GM12878 (cell line): ENCODE measurements at regions of chr1 and their contacts with region 1.

Region 1: GRCh38 chr1:207404849-207405525 is 49.1 kb upstream of the CR2 start:
- DNase-seq: no peak
- ATAC-seq: peak; percentile 95
- H3K4me3 ChIP-seq: no peak overlapping the region
- H3K27ac ChIP-seq: no peak overlapping the region
- H3K4me1 ChIP-seq: peaks cover 10% of the 10 kb centered on the region
- H3K27me3 ChIP-seq: no peaks in the 10 kb centered on the region
- CTCF ChIP-seq: peak; percentile 62 to 81 (median 65)
- EP300 ChIP-seq: no peak
- POLR2A ChIP-seq: no peak
- RAD21 ChIP-seq: peak; percentile 85

Region 2: GRCh38 chr1:207052911-207053769 is 351.8 kb before region 1 on chr1 and contains the start of gene PFKFB2:
- CTCF ChIA-PET with region 1: interaction called, 13 read pairs
- POLR2A ChIA-PET with region 1: no interaction called
- RAD21 ChIA-PET with region 1: interaction called, 6 read pairs
- SMC1A ChIA-PET with region 1: interaction called, 25 read pairs
- in situ Hi-C with region 1: no loop called
- intact Hi-C with region 1: no loop called
- DNase-seq: peak; percentile 66
- ATAC-seq: peak; percentile 87
- H3K4me3 ChIP-seq: peak within 1 kb of the TSS; percentile 82
- H3K27ac ChIP-seq: peak within 1 kb of the TSS; percentile 31; the same call in 1 of the 2 replicates
- H3K4me1 ChIP-seq: peaks cover 21% of the 10 kb centered on the region
- H3K27me3 ChIP-seq: no peaks in the 10 kb centered on the region
- CTCF ChIP-seq: peak in 2 of 3 experiments; percentile 18 to 31; a peak in 2 of 6 replicates
- EP300 ChIP-seq: no peak
- POLR2A ChIP-seq: peak; percentile 82
- RAD21 ChIP-seq: no peak
- polyA plus RNA-seq, gene PFKFB2: 0.40 to 0.47 TPM

Region 3: DNA sequence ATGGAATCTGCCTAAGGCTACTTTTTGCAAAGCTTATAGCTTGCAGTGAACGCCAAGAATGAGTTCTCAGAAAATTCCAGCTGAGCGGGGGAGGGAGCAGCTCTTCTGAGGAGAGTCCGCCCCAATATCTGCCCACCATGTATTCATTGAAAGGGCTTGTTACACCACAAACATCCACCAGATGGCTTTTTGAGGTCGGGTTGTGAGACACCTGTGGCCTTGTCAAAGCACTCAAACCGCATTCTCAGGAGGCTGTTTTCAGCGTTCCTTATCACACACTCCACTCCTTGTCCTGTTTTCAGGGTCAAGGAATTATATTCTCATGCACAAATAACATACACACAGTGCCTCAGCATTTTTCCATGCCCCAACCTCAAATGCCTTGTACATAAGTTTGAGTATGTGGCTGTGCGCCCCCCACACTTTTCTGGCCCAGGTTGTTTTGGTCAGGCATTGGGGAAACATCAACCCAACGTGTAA is 320.2 kb before region 1 on chr1:
- CTCF ChIA-PET with region 1: interaction called, 154 read pairs
- POLR2A ChIA-PET with region 1: no interaction called
- RAD21 ChIA-PET with region 1: interaction called, 54 read pairs
- SMC1A ChIA-PET with region 1: interaction called, 69 read pairs
- in situ Hi-C with region 1: loop called (anchors 5 kb)
- intact Hi-C with region 1: loop called (anchors 1 kb)
- DNase-seq: no peak
- ATAC-seq: peak; percentile 96
- H3K4me3 ChIP-seq: no peak overlapping the region
- H3K27ac ChIP-seq: no peak overlapping the region
- H3K4me1 ChIP-seq: peaks cover 4% of the 10 kb centered on the region; the same call in 1 of the 2 replicates
- H3K27me3 ChIP-seq: no peaks in the 10 kb centered on the region
- CTCF ChIP-seq: peak; percentile 63 to 68 (median 66)
- EP300 ChIP-seq: no peak
- POLR2A ChIP-seq: no peak
- RAD21 ChIP-seq: peak; percentile 80

Region 4: GRCh38 chr1:207181838-207182237 is 223.1 kb before region 1 on chr1:
- CTCF ChIA-PET with region 1: interaction called, 13 read pairs
- POLR2A ChIA-PET with region 1: no interaction called
- RAD21 ChIA-PET with region 1: interaction called, 7 read pairs
- SMC1A ChIA-PET with region 1: interaction called, 15 read pairs
- in situ Hi-C with region 1: no loop called
- intact Hi-C with region 1: loop called (anchors 10 kb)
- DNase-seq: no peak
- ATAC-seq: no peak
- H3K4me3 ChIP-seq: no peak overlapping the region
- H3K27ac ChIP-seq: no peak overlapping the region
- H3K4me1 ChIP-seq: no peaks in the 10 kb centered on the region
- H3K27me3 ChIP-seq: no peaks in the 10 kb centered on the region; a peak in 1 of 4 replicates
- CTCF ChIP-seq: peak in 2 of 3 experiments; percentile 11 to 33; a peak in 2 of 6 replicates
- EP300 ChIP-seq: no peak
- POLR2A ChIP-seq: no peak
- RAD21 ChIP-seq: peak; percentile 50

Region 5: GRCh38 chr1:207321079-207321789 is 83.8 kb before region 1 on chr1 and contains the start of gene CD55:
- CTCF ChIA-PET with region 1: interaction called, 20 read pairs
- POLR2A ChIA-PET with region 1: no interaction called
- RAD21 ChIA-PET with region 1: interaction called, 46 read pairs
- SMC1A ChIA-PET with region 1: interaction called, 31 read pairs
- in situ Hi-C with region 1: no loop called
- intact Hi-C with region 1: loop called (anchors 1 kb)
- DNase-seq: peak; percentile 97
- ATAC-seq: peak; percentile 92
- H3K4me3 ChIP-seq: peak within 1 kb of the TSS; percentile 85
- H3K27ac ChIP-seq: peak within 1 kb of the TSS; percentile 86
- H3K4me1 ChIP-seq: no peaks in the 10 kb centered on the region
- H3K27me3 ChIP-seq: no peaks in the 10 kb centered on the region
- CTCF ChIP-seq: peak; percentile 16 to 39 (median 37); a peak in 4 of 6 replicates
- EP300 ChIP-seq: peak in 1 of 2 experiments; percentile 90; a peak in 3 of 4 replicates
- POLR2A ChIP-seq: peak; percentile 97
- RAD21 ChIP-seq: peak; percentile 31
- polyA plus RNA-seq, gene CD55: 5.2 to 6.0 TPM

Region 6: GRCh38 chr1:207423560-207424292 is 18.7 kb after region 1 on chr1:
- CTCF ChIA-PET with region 1: interaction called, 14 read pairs
- POLR2A ChIA-PET with region 1: no interaction called
- RAD21 ChIA-PET with region 1: interaction called, 11 read pairs
- SMC1A ChIA-PET with region 1: interaction called, 14 read pairs
- in situ Hi-C with region 1: no loop called
- intact Hi-C with region 1: no loop called
- DNase-seq: no peak
- ATAC-seq: peak; percentile 73
- H3K4me3 ChIP-seq: peak overlapping the region; percentile 38; the same call in 1 of the 2 replicates
- H3K27ac ChIP-seq: no peak overlapping the region
- H3K4me1 ChIP-seq: peaks cover 30% of the 10 kb centered on the region
- H3K27me3 ChIP-seq: no peaks in the 10 kb centered on the region
- CTCF ChIP-seq: peak; percentile 24 to 44 (median 27); a peak in 5 of 6 replicates
- EP300 ChIP-seq: no peak
- POLR2A ChIP-seq: no peak
- RAD21 ChIP-seq: peak; percentile 38; the same call in 1 of the 2 replicates

Region 7: DNA sequence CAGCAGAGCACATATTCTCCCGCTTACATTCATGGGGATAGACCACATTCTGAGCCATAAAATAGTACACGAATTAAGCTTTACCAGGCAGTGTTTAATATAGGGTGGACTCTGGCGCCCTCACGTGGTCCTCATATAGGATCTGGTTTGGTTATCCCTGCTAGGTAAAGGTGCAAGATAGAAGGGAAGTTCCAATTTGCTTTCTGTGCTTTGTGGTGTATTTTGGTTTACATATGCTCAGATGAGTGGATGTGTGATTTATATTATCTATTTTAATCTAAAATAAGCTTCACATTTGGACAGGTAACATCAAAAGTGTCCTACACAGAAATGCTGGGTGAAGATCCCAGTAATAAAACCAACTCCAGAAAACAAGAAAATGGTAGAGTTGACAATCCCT is 94.6 kb after region 1 on chr1:
- CTCF ChIA-PET with region 1: interaction called, 43 read pairs
- POLR2A ChIA-PET with region 1: no interaction called
- RAD21 ChIA-PET with region 1: interaction called, 29 read pairs
- SMC1A ChIA-PET with region 1: interaction called, 53 read pairs
- in situ Hi-C with region 1: no loop called
- intact Hi-C with region 1: loop called (anchors 1 kb)
- DNase-seq: peak; percentile 64
- ATAC-seq: peak; percentile 81
- H3K4me3 ChIP-seq: no peak overlapping the region
- H3K27ac ChIP-seq: no peak overlapping the region
- H3K4me1 ChIP-seq: peaks cover 6% of the 10 kb centered on the region
- H3K27me3 ChIP-seq: no peaks in the 10 kb centered on the region; a peak in 1 of 4 replicates
- CTCF ChIP-seq: peak; percentile 64 to 85 (median 80)
- EP300 ChIP-seq: no peak
- POLR2A ChIP-seq: no peak
- RAD21 ChIP-seq: peak; percentile 96

Region 8: GRCh38 chr1:207762622-207763021 is 357.6 kb after region 1 on chr1:
- CTCF ChIA-PET with region 1: no interaction called
- POLR2A ChIA-PET with region 1: no interaction called
- RAD21 ChIA-PET with region 1: no interaction called
- SMC1A ChIA-PET with region 1: no interaction called
- in situ Hi-C with region 1: no loop called
- intact Hi-C with region 1: no loop called
- DNase-seq: no peak
- ATAC-seq: no peak
- H3K4me3 ChIP-seq: no peak overlapping the region
- H3K27ac ChIP-seq: no peak overlapping the region
- H3K4me1 ChIP-seq: no peaks in the 10 kb centered on the region
- H3K27me3 ChIP-seq: no peaks in the 10 kb centered on the region
- CTCF ChIP-seq: no peak
- EP300 ChIP-seq: no peak
- POLR2A ChIP-seq: no peak
- RAD21 ChIP-seq: no peak